Breast epithelium (tissue), 4 donors: ENCODE measurements at regions of chr14 and their contacts with region 1.

Region 1: GRCh38 chr14:75176142-75176820 is at the start of gene TMED10:
- DNase-seq: peak; percentile 85 to 95
- H3K4me3 ChIP-seq: peak within 1 kb of the TSS; percentile 70 to 96 (median 89)
- H3K27ac ChIP-seq: peak within 1 kb of the TSS; percentile 100
- H3K4me1 ChIP-seq: no peaks in the 10 kb centered on the region
- H3K27me3 ChIP-seq: no peaks in the 10 kb centered on the region
- CTCF ChIP-seq: peak in 2 of 3 donors; percentile 4 to 29
- POLR2A ChIP-seq: peak; percentile 58
- total RNA-seq, gene TMED10: 263 to 443 (median 285) TPM

Region 2: DNA sequence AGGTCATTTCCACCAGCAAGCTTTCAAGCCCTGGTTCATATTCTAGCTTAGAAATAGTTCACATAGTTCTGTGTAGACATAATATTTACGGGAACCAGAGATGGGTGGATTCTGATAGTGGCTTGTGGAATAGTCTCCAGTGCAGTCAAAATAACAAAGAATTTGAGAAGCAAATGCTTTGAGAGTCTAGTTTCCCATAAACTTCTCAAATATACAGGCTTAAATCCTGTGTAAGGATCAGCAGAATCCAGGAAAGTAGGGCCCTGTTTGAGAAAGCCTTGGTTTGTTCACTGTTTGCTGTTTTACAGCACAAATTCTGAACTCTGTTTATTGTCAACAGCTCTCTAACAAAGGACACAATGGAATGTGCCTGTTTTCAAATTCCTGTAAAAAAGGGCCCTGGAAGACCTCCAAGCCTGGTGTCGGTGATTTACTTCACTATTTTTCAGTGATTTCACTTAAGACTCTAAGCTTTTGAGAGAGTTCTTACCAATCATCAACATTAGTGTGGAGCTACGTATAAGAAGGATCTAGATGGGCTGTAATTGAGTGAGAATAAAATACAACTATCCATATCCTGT is 91.0 kb after region 1 on chr14:
- intact Hi-C with region 1: loop called (anchors 10 kb)
- DNase-seq: no peak
- H3K4me3 ChIP-seq: no peak overlapping the region
- H3K27ac ChIP-seq: peak overlapping the region; percentile 81 to 85
- H3K4me1 ChIP-seq: peaks cover 0 to 11% of the 10 kb centered on the region in 2 donors
- H3K27me3 ChIP-seq: no peaks in the 10 kb centered on the region
- CTCF ChIP-seq: no peak
- POLR2A ChIP-seq: no peak